Sciatic nerve (tissue), 2 donors: ENCODE measurements at regions of chrX and their contacts with region 1.

Region 1: DNA sequence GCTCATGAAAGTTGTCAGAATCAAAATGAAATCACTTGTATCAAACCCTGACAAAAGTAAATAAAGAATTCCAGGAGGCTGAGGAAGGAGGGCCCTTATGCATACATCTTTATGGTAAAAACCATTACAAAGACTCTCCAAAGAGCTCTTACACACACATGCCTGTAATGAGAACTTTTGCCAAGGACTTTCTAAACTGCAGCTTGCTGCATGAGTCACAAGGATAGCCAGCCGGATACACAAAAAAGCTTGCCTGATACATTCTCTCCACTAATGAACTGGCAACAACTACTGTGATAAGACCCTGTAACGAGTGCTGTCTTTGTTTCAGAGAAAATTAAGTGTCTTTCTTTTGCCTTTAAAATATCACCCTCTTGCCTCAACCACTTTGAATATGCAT is 618.1 kb downstream of the PPP4R3C start:
- DNase-seq: no peak
- ATAC-seq: no peak

Region 2: GRCh38 chrX:26864046-26864445 is 19.0 kb after region 1 on chrX:
- intact Hi-C with region 1: loop called (anchors 1 kb)
- DNase-seq: no peak
- ATAC-seq: no peak

Region 3: GRCh38 chrX:27863810-27864209 is 1018.8 kb after region 1 on chrX:
- intact Hi-C with region 1: no loop called
- DNase-seq: no peak
- ATAC-seq: no peak